Naive thymus-derived CD4-positive, alpha-beta T cell (primary cell): ENCODE measurements at regions of chr18 and their contacts with region 1.

Region 1: DNA sequence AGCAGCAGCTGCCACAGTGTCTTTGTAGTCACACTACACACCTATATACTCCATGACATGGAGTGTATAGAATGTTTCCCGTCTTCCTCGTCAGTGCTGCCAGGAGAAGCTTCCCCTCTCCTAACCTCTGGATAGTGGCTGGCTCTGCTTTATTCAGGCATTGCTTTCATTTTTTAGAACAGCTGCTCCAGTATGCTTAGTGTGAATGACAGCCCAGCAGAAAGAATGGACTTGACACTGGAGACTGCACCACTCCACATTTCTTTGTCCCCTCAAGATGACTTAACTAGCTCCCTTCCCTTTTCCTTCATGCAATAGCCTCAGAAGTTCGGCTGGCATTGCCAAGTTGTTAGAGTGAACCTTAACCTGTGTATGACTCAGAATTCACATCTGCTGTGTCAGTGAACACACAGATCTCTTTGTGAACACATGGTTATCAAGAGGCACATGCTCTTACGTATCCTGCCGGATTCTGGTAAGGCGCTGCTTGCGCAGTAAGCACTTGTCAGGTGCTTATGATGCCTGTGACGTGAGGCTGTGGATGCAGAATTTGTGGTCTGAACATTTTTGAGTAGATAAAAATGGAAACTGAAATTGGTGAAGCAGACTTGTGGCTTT is 73.9 kb downstream of the NEDD4L start:
- DNase-seq: no peak
- ATAC-seq: peak; percentile 41
- H3K4me3 ChIP-seq: no peak overlapping the region
- H3K4me3 Mint-ChIP-seq: no peak overlapping the region
- H3K27ac ChIP-seq: no peak overlapping the region
- H3K27ac Mint-ChIP-seq: no peak overlapping the region
- H3K4me1 ChIP-seq: no peaks in the 10 kb centered on the region
- H3K4me1 Mint-ChIP-seq: peaks cover 0 to 9% (median 0%) of the 10 kb centered on the region in 7 donors
- H3K27me3 ChIP-seq: no peaks in the 10 kb centered on the region
- H3K27me3 Mint-ChIP-seq: peaks cover 0 to 14% (median 4%) of the 10 kb centered on the region in 5 donors

Region 2: GRCh38 chr18:56267334-56267733 is 1850.6 kb before region 1 on chr18:
- CTCF ChIA-PET with region 1: no interaction called
- POLR2A ChIA-PET with region 1: no interaction called
- intact Hi-C with region 1: no loop called
- DNase-seq: no peak
- ATAC-seq: no peak
- H3K4me3 ChIP-seq: no peak overlapping the region
- H3K4me3 Mint-ChIP-seq: no peak overlapping the region
- H3K27ac ChIP-seq: no peak overlapping the region
- H3K27ac Mint-ChIP-seq: peak overlapping the region in 1 of 9 donors; percentile 72
- H3K4me1 ChIP-seq: no peaks in the 10 kb centered on the region
- H3K4me1 Mint-ChIP-seq: peaks cover 0 to 2% (median 0%) of the 10 kb centered on the region in 7 donors
- H3K27me3 ChIP-seq: no peaks in the 10 kb centered on the region
- H3K27me3 Mint-ChIP-seq: peaks cover 0 to 13% (median 10%) of the 10 kb centered on the region in 5 donors

Region 3: GRCh38 chr18:57320603-57321002 is 797.3 kb before region 1 on chr18:
- CTCF ChIA-PET with region 1: no interaction called
- POLR2A ChIA-PET with region 1: no interaction called
- intact Hi-C with region 1: no loop called
- DNase-seq: no peak
- ATAC-seq: no peak
- H3K4me3 ChIP-seq: no peak overlapping the region
- H3K4me3 Mint-ChIP-seq: no peak overlapping the region
- H3K27ac ChIP-seq: no peak overlapping the region
- H3K27ac Mint-ChIP-seq: no peak overlapping the region
- H3K4me1 ChIP-seq: no peaks in the 10 kb centered on the region
- H3K4me1 Mint-ChIP-seq: no peaks in the 10 kb centered on the region
- H3K27me3 ChIP-seq: no peaks in the 10 kb centered on the region
- H3K27me3 Mint-ChIP-seq: peaks cover 0 to 20% (median 3%) of the 10 kb centered on the region in 5 donors

Region 4: GRCh38 chr18:57959278-57959677 is 158.6 kb before region 1 on chr18:
- CTCF ChIA-PET with region 1: no interaction called
- POLR2A ChIA-PET with region 1: no interaction called
- intact Hi-C with region 1: loop called in 1 of 2 experiments (anchors 1 kb)
- DNase-seq: peak in 1 of 9 donors; percentile 2
- ATAC-seq: no peak
- H3K4me3 ChIP-seq: no peak overlapping the region
- H3K4me3 Mint-ChIP-seq: no peak overlapping the region
- H3K27ac ChIP-seq: no peak overlapping the region
- H3K27ac Mint-ChIP-seq: no peak overlapping the region
- H3K4me1 ChIP-seq: no peaks in the 10 kb centered on the region
- H3K4me1 Mint-ChIP-seq: peaks cover 0 to 3% (median 0%) of the 10 kb centered on the region in 7 donors
- H3K27me3 ChIP-seq: no peaks in the 10 kb centered on the region
- H3K27me3 Mint-ChIP-seq: peaks cover 11 to 30% (median 25%) of the 10 kb centered on the region in 5 donors

Region 5: DNA sequence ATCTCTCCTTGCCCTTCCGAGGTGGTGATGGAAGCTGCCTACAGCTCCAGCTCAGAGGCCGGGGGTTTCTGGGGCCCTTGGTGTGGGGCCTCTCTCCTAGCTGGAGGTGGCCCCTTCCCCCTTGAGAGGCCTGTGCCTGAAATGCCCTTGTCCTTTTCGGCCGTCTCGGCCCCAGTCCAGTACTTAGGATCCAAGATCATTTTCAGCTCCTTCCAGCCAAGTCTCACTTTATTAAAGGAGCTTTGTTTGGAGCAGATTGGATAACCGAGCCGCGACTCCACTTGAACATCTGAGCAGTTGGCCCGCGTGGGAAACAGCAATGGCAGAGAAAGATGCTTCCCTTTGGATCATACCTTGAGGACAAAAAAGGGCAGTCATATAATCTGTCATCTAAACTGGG is 51.1 kb after region 1 on chr18:
- CTCF ChIA-PET with region 1: no interaction called
- POLR2A ChIA-PET with region 1: no interaction called
- intact Hi-C with region 1: no loop called
- DNase-seq: no peak
- ATAC-seq: no peak
- H3K4me3 ChIP-seq: no peak overlapping the region
- H3K4me3 Mint-ChIP-seq: no peak overlapping the region
- H3K27ac ChIP-seq: no peak overlapping the region
- H3K27ac Mint-ChIP-seq: no peak overlapping the region
- H3K4me1 ChIP-seq: no peaks in the 10 kb centered on the region
- H3K4me1 Mint-ChIP-seq: no peaks in the 10 kb centered on the region
- H3K27me3 ChIP-seq: no peaks in the 10 kb centered on the region
- H3K27me3 Mint-ChIP-seq: peaks cover 0 to 15% (median 0%) of the 10 kb centered on the region in 5 donors